ENCODE measurements at regions of chr18 and their contacts with region 1.

Region 1: DNA sequence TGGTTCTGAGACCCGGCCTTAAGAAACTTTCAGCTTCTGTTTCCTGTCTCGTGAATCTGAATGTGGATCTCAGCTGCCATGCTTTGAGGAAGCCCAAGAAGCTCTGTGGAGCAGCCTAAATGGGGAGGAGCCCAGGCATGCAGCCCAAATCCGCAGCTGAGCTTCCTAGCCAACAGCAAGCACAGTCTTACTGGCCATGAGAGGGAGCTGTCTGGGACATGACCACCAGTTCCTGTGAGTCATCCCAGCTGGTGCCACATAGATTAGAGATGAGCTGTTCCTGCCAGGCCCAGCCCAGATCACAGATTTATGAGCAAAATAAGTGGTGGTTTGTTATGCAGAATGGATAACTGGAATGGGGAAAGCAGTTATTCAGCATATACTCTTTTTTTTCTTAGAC is 224.4 kb upstream of the APCDD1 start:
- DNase-seq: no peak

Region 2: GRCh38 chr18:10121786-10122542 is 108.1 kb before region 1 on chr18:
- intact Hi-C with region 1: loop called (anchors 10 kb)
- DNase-seq: no peak